Activated T-helper 2 cell treated with anti-CD3 and anti-CD28 coated beads, Interferon-gamma antibody, Interleukin-2, Interleukin-4, amounts not matched to agents 10 μg/mL and 5 μg/mL and 100 μg/mL, durations not matched to agents 14 hours and 24 hours and 36 hours (primary cell): ENCODE measurements at regions of chr13 and their contacts with region 1.

Region 1: GRCh38 chr13:51583875-51584730 is at the start of gene WDFY2:
- DNase-seq: peak; percentile 99
- H3K4me3 Mint-ChIP-seq: peak within 1 kb of the TSS; percentile 93
- H3K27ac Mint-ChIP-seq: peak within 1 kb of the TSS; percentile 94
- H3K4me1 Mint-ChIP-seq: peaks cover 30% of the 10 kb centered on the region
- H3K27me3 Mint-ChIP-seq: peaks cover under 1% of the 10 kb centered on the region
- total RNA-seq, gene WDFY2: 9.0 and 9.9 TPM in 2 replicates

Region 2: DNA sequence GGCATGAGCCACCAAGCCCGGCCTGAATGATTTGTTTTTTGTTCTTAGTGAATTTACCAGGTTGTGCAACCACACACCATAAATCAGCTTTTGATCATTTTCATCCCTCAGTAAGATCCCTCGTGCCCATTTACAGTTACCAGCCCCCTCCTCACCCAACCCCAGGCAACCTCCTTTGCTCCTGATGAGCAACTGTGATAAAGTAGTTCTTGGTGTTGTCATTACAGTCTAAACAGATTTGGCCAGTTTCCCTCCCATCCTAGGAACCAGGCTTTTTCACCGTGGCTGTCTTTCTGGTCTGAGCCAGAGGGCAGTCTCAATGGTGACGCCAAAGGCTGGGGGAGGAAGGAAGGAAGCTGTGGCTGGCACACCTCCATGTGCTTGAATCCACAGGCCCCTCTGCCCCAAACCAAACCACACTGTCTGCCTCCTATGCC is 61.0 kb before region 1 on chr13:
- intact Hi-C with region 1: loop called (anchors 2 kb)
- DNase-seq: no peak
- H3K4me3 Mint-ChIP-seq: no peak overlapping the region
- H3K27ac Mint-ChIP-seq: no peak overlapping the region
- H3K4me1 Mint-ChIP-seq: peaks cover 24% of the 10 kb centered on the region
- H3K27me3 Mint-ChIP-seq: no peaks in the 10 kb centered on the region

Region 3: DNA sequence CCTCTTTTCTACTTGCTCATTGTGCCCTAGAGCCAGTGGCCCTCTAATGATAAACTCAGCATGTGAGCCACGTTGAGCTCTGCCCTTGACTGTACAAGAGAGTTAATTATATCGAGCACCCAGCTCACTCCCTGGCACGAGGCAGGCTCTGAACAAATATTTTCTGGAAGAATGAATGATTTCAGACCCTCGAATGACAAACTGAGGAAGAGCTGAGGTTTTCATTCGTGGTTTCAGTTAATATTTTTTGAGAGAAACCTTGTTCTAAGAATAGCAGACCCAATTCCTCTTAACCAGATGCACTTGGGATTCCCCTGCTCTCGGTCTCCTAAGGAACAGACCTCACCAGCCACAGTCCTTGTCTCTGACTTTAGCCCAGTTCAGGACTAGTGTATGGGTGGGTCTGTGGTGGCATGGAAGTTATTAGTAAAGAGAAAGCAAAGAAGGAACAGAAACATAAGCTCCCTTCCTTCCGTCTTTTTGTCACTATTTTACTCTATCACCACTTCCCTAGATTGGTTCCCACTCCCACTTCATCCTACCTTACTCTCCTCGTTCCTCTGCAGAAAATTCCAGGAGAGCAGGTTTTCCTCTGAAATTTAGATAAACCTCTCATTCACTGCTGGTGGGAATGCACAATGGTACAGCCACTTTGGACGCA is 22.0 kb before region 1 on chr13:
- intact Hi-C with region 1: no loop called
- DNase-seq: no peak
- H3K4me3 Mint-ChIP-seq: no peak overlapping the region
- H3K27ac Mint-ChIP-seq: no peak overlapping the region
- H3K4me1 Mint-ChIP-seq: peaks cover 35% of the 10 kb centered on the region
- H3K27me3 Mint-ChIP-seq: no peaks in the 10 kb centered on the region

Region 4: GRCh38 chr13:51614350-51614786 is 30.3 kb after region 1 on chr13:
- intact Hi-C with region 1: loop called (anchors 1 kb)
- DNase-seq: peak; percentile 34
- H3K4me3 Mint-ChIP-seq: peak overlapping the region; percentile 82
- H3K27ac Mint-ChIP-seq: peak overlapping the region; percentile 97
- H3K4me1 Mint-ChIP-seq: peaks cover 17% of the 10 kb centered on the region
- H3K27me3 Mint-ChIP-seq: no peaks in the 10 kb centered on the region

Region 5: GRCh38 chr13:51619614-51620013 is 35.5 kb after region 1 on chr13:
- intact Hi-C with region 1: loop called (anchors 1 kb)
- DNase-seq: no peak
- H3K4me3 Mint-ChIP-seq: no peak overlapping the region
- H3K27ac Mint-ChIP-seq: peak overlapping the region; percentile 11
- H3K4me1 Mint-ChIP-seq: peaks cover 41% of the 10 kb centered on the region
- H3K27me3 Mint-ChIP-seq: no peaks in the 10 kb centered on the region

Region 6: GRCh38 chr13:51689663-51689996 is 105.5 kb after region 1 on chr13:
- intact Hi-C with region 1: no loop called
- DNase-seq: no peak
- H3K4me3 Mint-ChIP-seq: no peak overlapping the region
- H3K27ac Mint-ChIP-seq: no peak overlapping the region
- H3K4me1 Mint-ChIP-seq: peaks cover 18% of the 10 kb centered on the region
- H3K27me3 Mint-ChIP-seq: no peaks in the 10 kb centered on the region

Region 7: GRCh38 chr13:51704399-51705313 is 120.6 kb after region 1 on chr13:
- intact Hi-C with region 1: no loop called
- DNase-seq: no peak
- H3K4me3 Mint-ChIP-seq: no peak overlapping the region
- H3K27ac Mint-ChIP-seq: no peak overlapping the region
- H3K4me1 Mint-ChIP-seq: no peaks in the 10 kb centered on the region
- H3K27me3 Mint-ChIP-seq: no peaks in the 10 kb centered on the region

Region 8: GRCh38 chr13:51764184-51765141 is 180.4 kb after region 1 on chr13:
- intact Hi-C with region 1: loop called (anchors 1 kb)
- DNase-seq: peak; percentile 47
- H3K4me3 Mint-ChIP-seq: peak overlapping the region; percentile 75
- H3K27ac Mint-ChIP-seq: peak overlapping the region; percentile 95
- H3K4me1 Mint-ChIP-seq: peaks cover 30% of the 10 kb centered on the region
- H3K27me3 Mint-ChIP-seq: no peaks in the 10 kb centered on the region

Region 9: DNA sequence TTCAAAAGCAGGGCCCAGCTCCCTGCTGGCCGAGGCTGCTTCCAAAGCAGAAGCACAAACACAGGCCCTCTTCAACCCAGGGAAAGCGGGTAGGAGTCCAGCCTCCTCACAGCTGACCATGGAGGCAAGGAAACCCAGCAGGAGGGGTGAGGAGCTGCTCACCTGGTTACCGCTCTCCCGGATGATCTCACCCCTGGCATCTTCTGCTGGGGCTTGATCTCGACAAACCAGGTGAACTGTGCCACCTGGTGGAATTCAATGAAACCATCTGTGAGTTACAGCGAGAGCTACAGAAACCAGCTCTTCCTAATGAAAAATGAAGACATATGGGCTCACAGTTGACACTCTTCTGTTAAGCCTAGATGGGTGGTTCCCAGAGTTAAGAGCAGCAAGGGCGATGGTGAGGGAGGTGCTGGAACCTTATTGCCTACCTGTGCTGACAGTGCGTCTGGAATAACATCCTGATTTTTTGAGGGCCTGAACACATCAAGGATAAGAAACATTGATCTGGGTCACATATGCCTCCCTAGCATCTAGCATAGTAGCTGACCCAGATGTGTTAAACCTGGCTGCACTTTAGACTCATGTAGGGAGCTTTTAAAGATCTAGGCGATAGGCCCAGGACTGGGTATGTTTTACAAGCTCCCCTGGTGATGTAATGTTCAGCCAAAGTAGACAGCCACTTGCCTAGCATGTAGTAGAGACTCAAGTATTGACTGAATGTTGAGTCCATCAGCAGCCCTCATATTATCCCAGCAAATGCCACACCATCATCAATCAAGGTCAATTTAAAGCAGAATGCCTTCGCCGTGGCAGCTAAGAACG is 213.8 kb after region 1 on chr13:
- intact Hi-C with region 1: loop called (anchors 1 kb)
- DNase-seq: peak; percentile 47
- H3K4me3 Mint-ChIP-seq: no peak overlapping the region
- H3K27ac Mint-ChIP-seq: no peak overlapping the region
- H3K4me1 Mint-ChIP-seq: peaks cover 26% of the 10 kb centered on the region
- H3K27me3 Mint-ChIP-seq: peaks cover 4% of the 10 kb centered on the region

Region 10: DNA sequence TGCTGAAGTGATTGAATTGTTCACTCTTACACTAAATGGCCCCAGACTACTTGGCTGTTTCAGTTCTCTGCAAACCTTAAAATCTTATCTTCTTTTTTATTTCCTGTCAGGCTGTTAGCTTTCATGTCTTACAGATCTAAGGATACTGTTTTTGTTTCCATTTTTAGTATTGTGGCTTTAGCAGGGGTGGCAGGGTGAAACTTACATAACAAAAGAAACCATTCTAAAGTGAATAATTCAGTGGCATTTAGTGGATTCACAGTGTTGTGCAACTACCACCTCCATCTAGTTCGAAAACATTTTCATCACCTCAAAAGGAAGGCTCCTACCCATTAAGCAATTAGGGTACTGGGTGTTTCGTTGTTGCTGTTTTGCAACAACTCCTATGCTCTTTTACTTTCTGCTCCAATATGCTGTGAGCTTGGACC is 241.1 kb after region 1 on chr13:
- intact Hi-C with region 1: loop called (anchors 1 kb)
- DNase-seq: no peak
- H3K4me3 Mint-ChIP-seq: peak overlapping the region; percentile 32
- H3K27ac Mint-ChIP-seq: peak overlapping the region; percentile 33
- H3K4me1 Mint-ChIP-seq: peaks cover 69% of the 10 kb centered on the region
- H3K27me3 Mint-ChIP-seq: peaks cover 53% of the 10 kb centered on the region

Region 11: DNA sequence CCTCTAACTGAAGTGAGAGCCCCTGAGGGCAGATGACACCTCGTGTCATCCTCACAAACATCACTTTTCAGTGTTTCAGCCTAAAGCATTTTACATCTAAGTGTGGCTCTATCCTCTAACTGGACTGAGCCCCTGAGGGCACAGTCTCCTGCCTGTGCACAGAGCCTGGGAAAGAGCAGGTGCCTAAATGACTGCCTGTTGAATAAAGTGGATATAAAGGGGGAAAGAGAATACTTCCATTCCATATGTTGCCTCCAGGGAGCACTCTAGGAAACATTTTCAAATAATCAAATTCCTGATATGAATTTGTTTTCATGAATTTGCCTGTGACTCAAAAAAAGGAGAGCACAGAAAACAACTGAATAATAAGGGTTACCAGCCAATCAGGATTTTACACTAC is 1123.3 kb after region 1 on chr13:
- intact Hi-C with region 1: no loop called
- DNase-seq: no peak
- H3K4me3 Mint-ChIP-seq: no peak overlapping the region
- H3K27ac Mint-ChIP-seq: no peak overlapping the region
- H3K4me1 Mint-ChIP-seq: no peaks in the 10 kb centered on the region
- H3K27me3 Mint-ChIP-seq: peaks cover 4% of the 10 kb centered on the region